ENCODE measurements at regions of chr6 and their contacts with region 1.

Region 1: GRCh38 chr6:90425161-90425641 is 128.6 kb upstream of the BACH2 start:
- DNase-seq: no peak
- H3K4me3 Mint-ChIP-seq: peak overlapping the region; percentile 52
- H3K27ac Mint-ChIP-seq: peak overlapping the region; percentile 95
- H3K4me1 Mint-ChIP-seq: peaks cover 28% of the 10 kb centered on the region
- H3K27me3 Mint-ChIP-seq: no peaks in the 10 kb centered on the region

Region 2: GRCh38 chr6:89909991-89910390 is 515.2 kb before region 1 on chr6:
- intact Hi-C with region 1: no loop called
- DNase-seq: no peak
- H3K4me3 Mint-ChIP-seq: no peak overlapping the region
- H3K27ac Mint-ChIP-seq: no peak overlapping the region
- H3K4me1 Mint-ChIP-seq: peaks cover 1% of the 10 kb centered on the region
- H3K27me3 Mint-ChIP-seq: peaks cover 9% of the 10 kb centered on the region

Region 3: GRCh38 chr6:90266905-90267621 is 158.1 kb before region 1 on chr6:
- intact Hi-C with region 1: no loop called
- DNase-seq: no peak
- H3K4me3 Mint-ChIP-seq: peak overlapping the region; percentile 27
- H3K27ac Mint-ChIP-seq: peak overlapping the region; percentile 71
- H3K4me1 Mint-ChIP-seq: peaks cover 82% of the 10 kb centered on the region
- H3K27me3 Mint-ChIP-seq: no peaks in the 10 kb centered on the region

Region 4: DNA sequence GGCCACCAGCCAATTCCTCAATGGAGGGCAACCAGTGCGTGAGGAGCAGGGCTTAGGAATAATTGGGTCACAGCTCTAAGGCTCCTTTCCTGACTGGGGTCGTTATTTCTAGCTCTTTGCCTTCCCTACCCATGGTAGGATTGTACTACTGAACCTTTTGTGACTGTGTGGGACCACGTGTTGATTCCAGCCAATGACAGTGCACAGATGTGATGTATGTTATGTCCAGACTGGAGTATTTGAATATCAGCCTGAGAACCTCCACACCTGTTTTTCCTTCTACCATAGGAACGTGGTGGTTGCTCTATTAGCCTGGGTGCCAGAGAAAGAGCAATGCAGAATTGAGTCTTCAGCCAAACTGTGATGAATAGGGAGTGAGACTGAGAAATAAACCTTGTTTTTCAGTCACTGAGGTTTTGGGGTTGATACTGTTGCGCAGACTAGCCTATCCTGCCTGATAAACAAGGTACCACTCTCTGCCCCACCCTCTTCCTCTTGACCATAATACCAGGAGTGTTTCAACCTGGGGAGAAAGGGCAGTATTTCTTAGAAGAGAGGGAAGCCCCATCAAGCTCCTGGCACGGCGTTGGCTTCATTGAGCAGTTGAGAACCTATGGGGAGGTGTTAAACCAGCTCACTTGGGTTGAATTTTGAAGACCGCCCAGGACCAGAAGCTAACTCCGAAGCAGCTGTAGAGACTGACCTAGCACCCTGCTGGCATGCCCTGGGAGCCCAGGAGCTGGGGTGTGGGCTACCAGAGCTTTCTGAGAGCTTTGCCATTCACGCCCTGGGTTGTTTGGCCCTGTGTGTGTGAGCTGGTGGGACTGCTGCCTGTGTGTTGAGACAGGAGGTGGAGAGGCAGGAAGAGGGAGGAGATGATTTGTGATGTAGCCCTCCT is 23.0 kb before region 1 on chr6:
- intact Hi-C with region 1: loop called (anchors 1 kb)
- DNase-seq: peak; percentile 41
- H3K4me3 Mint-ChIP-seq: peak overlapping the region; percentile 15
- H3K27ac Mint-ChIP-seq: peak overlapping the region; percentile 88
- H3K4me1 Mint-ChIP-seq: peaks cover 85% of the 10 kb centered on the region
- H3K27me3 Mint-ChIP-seq: no peaks in the 10 kb centered on the region

Region 5: DNA sequence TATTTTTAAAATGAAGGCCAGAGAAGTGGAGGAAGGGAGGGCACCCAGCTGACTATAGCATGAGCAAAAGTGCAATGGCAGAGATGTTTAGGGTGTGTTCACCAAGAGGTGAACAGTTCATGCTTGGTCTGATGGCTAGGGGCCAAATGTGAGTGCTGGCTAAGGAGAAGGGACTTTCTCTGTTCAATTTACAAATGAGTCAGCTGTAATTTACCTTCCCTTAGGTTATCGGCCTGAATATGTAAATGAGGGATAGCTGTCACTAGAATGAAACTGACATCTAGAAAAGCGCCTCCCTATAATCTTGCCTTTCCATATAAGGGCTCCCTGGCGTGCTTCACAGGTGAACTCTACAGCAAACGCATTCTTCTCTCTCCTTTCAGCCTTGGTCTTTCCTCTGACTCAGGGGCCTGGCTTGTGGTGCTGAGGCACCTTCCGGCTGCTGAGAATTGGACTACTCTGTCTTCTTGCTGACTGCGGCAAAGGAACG is 13.9 kb before region 1 on chr6:
- intact Hi-C with region 1: loop called (anchors 1 kb)
- DNase-seq: peak; percentile 62
- H3K4me3 Mint-ChIP-seq: no peak overlapping the region
- H3K27ac Mint-ChIP-seq: peak overlapping the region; percentile 81
- H3K4me1 Mint-ChIP-seq: peaks cover 81% of the 10 kb centered on the region
- H3K27me3 Mint-ChIP-seq: no peaks in the 10 kb centered on the region

Region 6: DNA sequence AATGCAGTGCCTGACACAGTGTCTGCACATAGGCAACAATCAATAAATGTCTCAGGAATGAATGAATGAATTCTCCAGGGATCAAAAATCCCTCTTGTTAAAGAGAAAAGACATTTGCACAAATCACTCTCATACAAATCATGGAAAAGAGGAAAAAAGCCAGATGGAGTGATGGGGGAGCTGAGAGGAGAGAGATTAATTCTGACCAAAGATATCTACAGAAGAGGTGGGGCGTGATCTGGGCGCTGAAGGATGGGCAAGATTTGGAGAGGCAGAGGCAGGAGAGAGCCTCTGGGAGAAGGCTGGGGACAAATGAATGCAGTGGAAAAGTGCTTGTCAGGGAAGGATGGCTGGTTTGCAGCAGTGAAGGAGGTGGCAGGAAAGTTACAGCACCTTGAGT is 14.4 kb after region 1 on chr6:
- intact Hi-C with region 1: no loop called
- DNase-seq: no peak
- H3K4me3 Mint-ChIP-seq: no peak overlapping the region
- H3K27ac Mint-ChIP-seq: no peak overlapping the region
- H3K4me1 Mint-ChIP-seq: peaks cover 36% of the 10 kb centered on the region
- H3K27me3 Mint-ChIP-seq: no peaks in the 10 kb centered on the region

Region 7: DNA sequence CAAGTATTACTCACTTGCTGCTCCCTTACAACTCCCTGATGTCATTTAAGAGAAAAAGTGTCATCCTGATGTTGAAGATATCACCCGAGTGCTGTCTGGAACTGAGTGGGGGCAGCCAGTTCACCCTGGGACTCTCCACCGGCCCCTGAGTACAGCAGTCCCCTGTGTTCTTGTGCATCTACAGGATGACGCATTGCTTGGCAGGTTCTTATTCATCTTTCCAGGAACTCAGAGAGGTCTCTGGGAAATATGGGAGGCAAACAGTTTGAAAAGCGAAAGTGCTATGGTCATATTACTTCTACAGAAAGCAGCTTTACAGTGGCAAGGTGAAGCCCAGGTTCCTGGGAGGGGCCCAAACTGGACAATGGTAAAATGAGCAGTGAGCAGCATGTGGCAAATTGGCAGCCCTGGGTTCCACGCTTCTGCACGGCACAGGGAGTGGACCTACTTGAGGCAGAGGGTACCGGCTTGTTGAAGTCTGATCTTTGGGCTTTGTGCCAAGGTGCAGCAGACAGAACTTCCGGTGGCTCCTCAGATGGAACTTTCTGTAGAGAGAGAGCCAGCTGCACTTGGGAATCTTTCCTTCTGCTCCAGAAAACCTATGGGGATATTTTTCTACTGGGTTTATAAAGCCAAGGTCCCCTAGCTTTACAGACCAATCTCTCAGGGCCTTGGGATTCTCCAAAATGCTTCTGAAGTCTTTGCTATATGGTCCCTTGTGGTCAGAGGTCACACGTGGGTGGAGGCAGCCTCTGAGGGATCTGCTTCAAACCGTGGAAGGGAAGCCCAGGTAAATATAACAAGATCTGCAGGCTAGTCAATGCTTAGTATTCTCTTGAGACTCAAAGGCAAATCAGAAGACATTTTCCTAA is 33.4 kb after region 1 on chr6:
- intact Hi-C with region 1: loop called (anchors 1 kb)
- DNase-seq: peak; percentile 68
- H3K4me3 Mint-ChIP-seq: peak overlapping the region; percentile 27
- H3K27ac Mint-ChIP-seq: peak overlapping the region; percentile 95
- H3K4me1 Mint-ChIP-seq: peaks cover 76% of the 10 kb centered on the region
- H3K27me3 Mint-ChIP-seq: no peaks in the 10 kb centered on the region

Region 8: DNA sequence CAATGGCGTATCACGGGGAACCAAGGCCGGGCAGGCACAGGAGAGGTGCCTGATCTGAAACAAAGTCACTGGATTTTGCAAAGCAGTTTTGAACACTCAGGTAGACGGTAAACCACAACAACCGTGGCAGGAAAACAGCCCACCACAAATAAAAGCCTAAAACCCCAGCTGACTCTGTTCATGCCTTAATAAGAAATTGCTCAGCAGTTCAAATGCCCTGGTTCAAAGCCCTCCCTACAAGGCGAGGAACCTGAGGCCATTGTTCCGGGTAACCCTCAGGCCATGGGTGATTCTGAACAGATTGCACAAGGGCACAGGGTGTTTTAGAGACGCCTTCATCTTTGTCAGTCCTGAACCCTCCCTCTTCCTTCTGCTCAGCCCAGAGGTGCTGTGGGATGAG is 47.5 kb after region 1 on chr6:
- intact Hi-C with region 1: loop called (anchors 1 kb)
- DNase-seq: peak; percentile 57
- H3K4me3 Mint-ChIP-seq: peak overlapping the region; percentile 72
- H3K27ac Mint-ChIP-seq: peak overlapping the region; percentile 93
- H3K4me1 Mint-ChIP-seq: peaks cover 94% of the 10 kb centered on the region
- H3K27me3 Mint-ChIP-seq: no peaks in the 10 kb centered on the region

Region 9: GRCh38 chr6:90502866-90503407 is 77.7 kb after region 1 on chr6:
- intact Hi-C with region 1: no loop called
- DNase-seq: no peak
- H3K4me3 Mint-ChIP-seq: no peak overlapping the region
- H3K27ac Mint-ChIP-seq: peak overlapping the region; percentile 72
- H3K4me1 Mint-ChIP-seq: peaks cover 11% of the 10 kb centered on the region
- H3K27me3 Mint-ChIP-seq: peaks cover 8% of the 10 kb centered on the region

Measured in activated T-helper 2 cell treated with anti-CD3 and anti-CD28 coated beads, Interferon-gamma antibody, Interleukin-2, Interleukin-4, amounts not matched to agents 10 μg/mL and 5 μg/mL and 100 μg/mL, durations not matched to agents 14 hours and 24 hours and 36 hours (primary cell).